ENCODE measurements at regions of chr15 and their contacts with region 1.

Region 1: DNA sequence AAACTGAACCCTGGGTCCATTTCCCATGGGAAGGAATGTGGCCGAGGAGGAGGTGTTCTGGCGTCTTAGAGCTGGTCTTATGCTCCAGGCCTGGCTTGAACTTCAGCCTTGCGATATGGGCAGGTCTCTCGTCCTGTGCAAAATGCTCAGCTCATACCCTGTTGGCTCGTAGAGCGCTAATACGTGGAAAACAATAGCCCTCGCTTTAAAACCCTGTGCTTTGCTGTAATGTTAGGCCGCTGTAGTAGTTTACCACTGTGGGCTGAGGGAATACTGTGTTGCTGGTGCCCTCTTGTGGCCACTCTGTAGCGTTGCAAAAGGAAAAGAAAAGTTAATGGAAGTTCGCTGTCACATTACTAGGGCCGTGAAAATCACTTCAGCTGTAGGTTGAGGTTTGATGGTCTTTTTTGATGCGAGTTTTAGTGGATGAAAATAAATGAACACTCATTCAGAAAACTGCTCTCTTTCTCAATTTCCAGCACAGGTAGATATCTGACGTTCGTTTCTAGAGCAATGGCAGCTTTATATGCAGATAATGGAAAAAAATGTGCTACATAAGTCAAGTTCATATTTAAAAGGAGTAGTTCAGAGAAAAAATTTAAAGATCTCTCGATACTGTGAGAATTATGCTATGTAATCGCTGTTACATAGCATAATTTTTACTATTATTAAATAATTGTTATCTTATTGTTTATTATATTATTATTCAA is 92.9 kb downstream of the MCTP2 start:
- DNase-seq: peak; percentile 44
- H3K4me3 Mint-ChIP-seq: no peak overlapping the region
- H3K27ac Mint-ChIP-seq: peak overlapping the region; percentile 5
- H3K4me1 Mint-ChIP-seq: peaks cover 30% of the 10 kb centered on the region
- H3K27me3 Mint-ChIP-seq: no peaks in the 10 kb centered on the region

Region 2: DNA sequence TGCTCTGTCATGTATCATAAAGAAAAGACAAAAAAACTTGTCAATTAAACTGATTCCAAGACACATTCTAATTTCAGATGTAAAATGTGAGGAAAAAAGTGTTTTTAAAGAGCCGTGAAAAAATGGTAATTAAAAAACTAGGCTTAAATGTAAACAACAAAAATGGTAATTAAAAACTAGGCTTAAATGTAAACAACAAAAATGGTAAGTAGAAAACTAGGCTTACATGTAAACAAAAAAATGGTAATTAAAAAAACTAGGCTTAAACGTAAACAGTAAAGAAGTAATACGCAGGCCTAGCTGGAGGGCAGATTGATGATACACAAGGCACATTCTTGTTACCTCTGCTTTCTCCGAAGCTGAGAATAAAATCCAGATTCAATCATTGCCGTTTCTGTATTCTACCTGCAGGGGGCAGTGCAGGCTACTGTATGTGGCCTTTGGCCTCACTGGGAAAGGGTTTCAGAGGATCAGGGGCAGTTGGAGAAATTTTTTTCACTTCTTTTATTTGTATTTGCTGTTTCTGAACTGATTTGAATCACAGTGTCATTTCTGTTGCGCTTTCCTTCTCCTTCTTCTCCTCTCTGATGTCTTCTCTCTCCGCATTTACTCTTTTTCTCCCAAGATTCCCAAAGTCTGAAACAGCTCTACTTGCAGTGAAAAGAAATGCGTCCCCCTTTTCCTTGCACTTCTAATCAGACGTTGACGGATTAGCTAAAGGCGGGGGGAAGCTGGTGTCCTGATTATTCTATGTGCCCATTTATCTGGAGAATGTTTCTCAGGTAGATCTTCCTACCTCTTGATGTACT is 160.1 kb before region 1 on chr15:
- intact Hi-C with region 1: loop called (anchors 1 kb)
- DNase-seq: peak; percentile 45
- H3K4me3 Mint-ChIP-seq: no peak overlapping the region
- H3K27ac Mint-ChIP-seq: no peak overlapping the region
- H3K4me1 Mint-ChIP-seq: peaks cover 15% of the 10 kb centered on the region
- H3K27me3 Mint-ChIP-seq: peaks cover 22% of the 10 kb centered on the region

Region 3: DNA sequence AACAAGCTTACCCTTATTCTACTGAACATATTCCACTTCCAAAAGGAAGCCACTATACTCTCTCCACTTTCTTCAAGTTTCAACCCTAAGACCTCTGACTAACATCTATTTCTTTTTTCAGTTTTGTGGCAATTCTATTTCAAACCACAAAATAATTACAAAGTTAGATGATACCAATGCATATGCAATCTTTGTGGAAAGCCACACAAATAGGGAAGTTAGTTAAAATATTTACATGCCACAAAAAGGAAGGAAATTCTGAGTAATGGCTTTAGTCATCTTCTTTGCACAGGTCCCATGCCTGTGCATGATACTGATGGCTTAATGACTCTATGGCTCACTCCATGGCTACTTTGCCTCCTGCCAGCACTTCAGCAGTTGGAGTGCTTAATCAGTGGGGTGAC is 149.9 kb before region 1 on chr15:
- intact Hi-C with region 1: loop called (anchors 2 kb)
- DNase-seq: no peak
- H3K4me3 Mint-ChIP-seq: peak overlapping the region; percentile 0
- H3K27ac Mint-ChIP-seq: peak overlapping the region; percentile 28
- H3K4me1 Mint-ChIP-seq: peaks cover 54% of the 10 kb centered on the region
- H3K27me3 Mint-ChIP-seq: peaks cover 1% of the 10 kb centered on the region

Region 4: DNA sequence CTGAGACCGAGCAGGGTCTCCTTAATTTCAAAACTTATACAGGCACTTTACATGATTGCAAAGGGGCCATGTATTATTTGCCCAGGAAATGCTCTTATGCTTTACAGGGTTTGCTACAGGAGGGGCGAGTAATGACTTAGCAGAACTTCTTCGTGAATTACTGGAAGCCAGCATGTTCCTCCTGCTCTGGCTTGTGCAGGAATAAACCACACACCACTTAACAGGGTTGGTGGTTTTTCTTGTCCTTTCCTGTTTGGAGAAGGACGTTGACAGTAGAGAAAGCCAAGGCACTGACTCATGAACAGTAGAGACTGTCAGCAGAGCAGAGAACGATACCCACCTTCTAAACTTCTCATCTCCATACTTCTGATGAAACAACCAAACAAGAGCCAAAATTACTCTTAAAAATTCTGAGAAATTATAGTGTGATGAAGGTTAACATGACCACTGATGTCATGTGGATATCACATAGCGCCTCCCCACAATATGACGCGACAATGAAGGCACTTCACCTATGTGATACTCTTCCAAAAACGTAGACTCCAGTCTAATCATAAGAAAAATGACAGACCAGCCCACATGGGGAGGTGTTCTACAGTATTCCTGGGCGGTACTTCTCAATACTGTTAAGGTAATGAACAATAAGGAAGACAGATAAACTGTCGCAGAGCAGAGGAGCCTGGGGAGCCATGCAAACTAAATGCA is 117.7 kb before region 1 on chr15:
- intact Hi-C with region 1: loop called (anchors 1 kb)
- DNase-seq: peak; percentile 61
- H3K4me3 Mint-ChIP-seq: peak overlapping the region; percentile 60
- H3K27ac Mint-ChIP-seq: peak overlapping the region; percentile 96
- H3K4me1 Mint-ChIP-seq: peaks cover 40% of the 10 kb centered on the region
- H3K27me3 Mint-ChIP-seq: no peaks in the 10 kb centered on the region

Region 5: GRCh38 chr15:94607176-94607654 is 282.9 kb after region 1 on chr15:
- intact Hi-C with region 1: no loop called
- DNase-seq: no peak
- H3K4me3 Mint-ChIP-seq: no peak overlapping the region
- H3K27ac Mint-ChIP-seq: no peak overlapping the region
- H3K4me1 Mint-ChIP-seq: peaks cover 23% of the 10 kb centered on the region
- H3K27me3 Mint-ChIP-seq: peaks cover 68% of the 10 kb centered on the region